ENCODE measurements at regions of chr19 and their contacts with region 1.

Region 1: DNA sequence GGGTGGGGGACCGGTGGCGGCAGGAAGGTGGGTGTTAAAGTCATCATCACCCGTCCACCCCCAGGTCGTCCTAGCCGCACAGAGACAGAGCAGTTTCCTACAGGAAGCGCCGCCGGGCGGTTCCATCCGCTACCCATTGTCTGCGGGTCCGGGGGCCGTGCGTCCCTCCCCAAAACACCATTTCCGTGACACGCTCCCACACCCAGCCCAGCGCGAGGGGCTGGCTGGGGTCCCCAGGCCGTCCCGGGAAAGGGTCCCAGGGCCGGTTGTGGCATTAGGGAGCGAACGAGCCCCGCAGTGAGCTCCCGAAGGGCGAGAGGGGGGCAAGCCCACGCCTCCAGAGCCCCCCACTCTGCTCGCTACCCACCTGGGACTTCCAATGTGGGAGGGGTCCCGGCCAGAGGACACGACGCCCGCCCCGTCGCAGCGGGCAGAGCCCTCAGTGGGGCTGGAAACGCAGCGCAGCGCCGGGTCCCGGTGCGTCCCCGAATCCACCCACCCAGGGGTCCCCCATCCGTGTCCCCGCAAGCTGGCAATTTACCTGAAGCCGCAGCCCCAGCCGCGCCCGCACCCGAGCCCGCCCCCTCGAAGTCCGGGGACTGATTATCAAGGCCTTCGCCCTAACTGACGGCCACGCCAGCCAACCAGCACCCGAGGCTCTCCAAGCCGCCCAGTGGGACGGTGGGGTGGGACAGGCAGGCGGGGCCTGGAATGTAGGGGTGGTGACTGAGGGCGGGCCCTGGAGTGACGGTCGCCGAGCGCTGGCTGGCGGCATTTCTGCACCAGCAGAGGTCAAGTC is at the start of gene KANK3:
- DNase-seq: peak; percentile 74
- ATAC-seq: peak; percentile 100
- H3K4me3 Mint-ChIP-seq: peak within 1 kb of the TSS; percentile 75
- H3K27ac Mint-ChIP-seq: no peak within 1 kb of the TSS
- H3K4me1 Mint-ChIP-seq: peaks cover 6% of the 10 kb centered on the region
- H3K27me3 Mint-ChIP-seq: peaks cover 21% of the 10 kb centered on the region
- CTCF ChIP-seq: no peak
- total RNA-seq, gene KANK3: 0.07 and 0.29 TPM in 2 replicates

Region 2: DNA sequence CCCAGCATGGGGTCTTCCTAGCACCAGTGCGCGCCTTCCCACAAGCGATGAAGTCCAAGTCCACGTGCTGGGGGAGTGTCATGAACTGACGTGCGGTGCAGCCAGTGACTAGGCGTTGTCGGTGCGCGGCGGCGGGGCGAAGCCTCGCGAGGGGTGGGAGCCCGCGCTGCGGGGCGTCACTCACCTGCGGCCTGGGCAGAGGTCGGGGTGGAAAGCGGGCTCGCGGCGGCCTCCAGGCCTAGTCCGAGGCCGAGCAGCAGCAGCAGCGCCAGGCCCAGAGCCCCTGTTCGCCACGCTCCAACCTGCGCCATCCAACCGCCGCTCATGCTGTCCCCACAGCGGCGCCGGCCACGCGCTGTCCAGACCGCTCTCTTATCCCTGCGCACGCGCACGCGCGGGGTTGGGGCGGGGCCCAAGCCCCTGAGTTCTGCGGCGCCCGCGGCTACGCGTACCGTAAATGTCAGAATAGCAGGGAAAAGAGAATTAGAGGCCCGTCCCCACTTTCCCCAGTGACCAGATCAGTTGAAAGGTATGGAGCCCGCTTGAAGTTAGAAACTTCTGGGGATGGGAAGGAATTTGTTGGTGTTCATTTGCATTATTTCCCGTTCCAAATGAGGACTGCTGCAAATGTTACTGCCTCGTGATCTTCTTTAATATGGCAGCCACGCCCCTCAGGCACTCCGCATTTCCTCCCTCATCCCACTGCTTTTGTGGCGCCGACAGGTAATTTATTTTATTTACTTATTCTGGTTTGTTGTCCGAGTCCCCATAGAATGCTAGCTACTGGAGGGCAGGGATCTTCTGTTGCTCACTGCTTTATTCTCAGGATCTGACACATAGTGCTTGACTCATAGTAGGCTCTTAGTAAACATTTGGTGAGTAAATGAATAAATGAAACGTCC is 34.7 kb before region 1 on chr19 and contains the start of gene CD320:
- CTCF ChIA-PET with region 1: no interaction called
- POLR2A ChIA-PET with region 1: no interaction called
- intact Hi-C with region 1: loop called (anchors 1 kb)
- DNase-seq: peak; percentile 88
- ATAC-seq: peak; percentile 90
- H3K4me3 Mint-ChIP-seq: peak within 1 kb of the TSS; percentile 89
- H3K27ac Mint-ChIP-seq: peak within 1 kb of the TSS; percentile 71
- H3K4me1 Mint-ChIP-seq: peaks cover 31% of the 10 kb centered on the region
- H3K27me3 Mint-ChIP-seq: no peaks in the 10 kb centered on the region
- CTCF ChIP-seq: no peak
- total RNA-seq, gene CD320: 23.7 and 24.6 TPM in 2 replicates

Region 3: DNA sequence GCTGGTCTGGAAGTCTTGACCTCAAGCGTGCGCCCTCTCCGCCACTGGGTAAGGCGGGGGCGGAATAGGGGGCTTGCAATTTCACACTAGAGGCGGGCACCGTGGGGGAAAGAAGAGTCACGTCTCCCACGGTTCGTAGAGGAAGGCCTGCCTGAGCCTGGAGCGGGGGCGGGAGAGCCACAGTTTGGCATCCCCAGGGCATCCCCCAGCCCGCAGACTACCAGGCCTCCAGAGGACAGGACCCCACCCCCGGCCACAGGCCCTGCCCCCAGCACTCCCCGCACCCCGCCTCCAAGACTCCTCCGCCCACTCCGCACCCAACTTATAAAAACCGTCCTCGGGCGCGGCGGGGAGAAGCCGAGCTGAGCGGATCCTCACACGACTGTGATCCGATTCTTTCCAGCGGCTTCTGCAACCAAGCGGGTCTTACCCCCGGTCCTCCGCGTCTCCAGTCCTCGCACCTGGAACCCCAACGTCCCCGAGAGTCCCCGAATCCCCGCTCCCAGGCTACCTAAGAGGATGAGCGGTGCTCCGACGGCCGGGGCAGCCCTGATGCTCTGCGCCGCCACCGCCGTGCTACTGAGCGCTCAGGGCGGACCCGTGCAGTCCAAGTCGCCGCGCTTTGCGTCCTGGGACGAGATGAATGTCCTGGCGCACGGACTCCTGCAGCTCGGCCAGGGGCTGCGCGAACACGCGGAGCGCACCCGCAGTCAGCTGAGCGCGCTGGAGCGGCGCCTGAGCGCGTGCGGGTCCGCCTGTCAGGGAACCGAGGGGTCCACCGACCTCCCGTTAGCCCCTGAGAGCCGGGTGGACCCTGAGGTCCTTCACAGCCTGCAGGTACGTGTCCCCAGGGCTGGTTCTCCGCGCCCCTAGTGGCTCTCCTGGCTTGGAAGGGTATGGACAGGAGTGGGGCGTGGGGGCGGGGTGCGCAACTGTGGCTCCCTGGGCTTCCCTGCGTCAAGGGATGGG is 21.2 kb after region 1 on chr19 and contains the start of gene ANGPTL4:
- CTCF ChIA-PET with region 1: no interaction called
- POLR2A ChIA-PET with region 1: no interaction called
- intact Hi-C with region 1: no loop called
- DNase-seq: no peak
- ATAC-seq: peak; percentile 66
- H3K4me3 Mint-ChIP-seq: peak within 1 kb of the TSS; percentile 60
- H3K27ac Mint-ChIP-seq: no peak within 1 kb of the TSS
- H3K4me1 Mint-ChIP-seq: peaks cover 14% of the 10 kb centered on the region
- H3K27me3 Mint-ChIP-seq: peaks cover 43% of the 10 kb centered on the region
- CTCF ChIP-seq: no peak
- total RNA-seq, gene ANGPTL4: not detected in 2 replicates

Measured in activated B cell treated with CpG ODN at 0.5 μM for 24 hours (primary cell).